Heart left ventricle (tissue), 16 donors: ENCODE measurements at regions of chr16 and their contacts with region 1.

Region 1: GRCh38 chr16:80948886-80949493 is 57.7 kb downstream of the CMC2 start:
- DNase-seq: peak in 4 of 5 donors; percentile 32 to 73 (median 46)
- ATAC-seq: peak in 3 of 4 donors; percentile 39 to 72 (median 63)
- H3K4me3 ChIP-seq: no peak overlapping the region
- H3K27ac ChIP-seq: no peak overlapping the region
- H3K4me1 ChIP-seq: peaks cover 0 to 4% (median 0%) of the 10 kb centered on the region in 12 donors
- H3K27me3 ChIP-seq: no peaks in the 10 kb centered on the region
- CTCF ChIP-seq: peak in 11 of 12 donors; percentile 20 to 72 (median 56)
- POLR2A ChIP-seq: no peak

Region 2: DNA sequence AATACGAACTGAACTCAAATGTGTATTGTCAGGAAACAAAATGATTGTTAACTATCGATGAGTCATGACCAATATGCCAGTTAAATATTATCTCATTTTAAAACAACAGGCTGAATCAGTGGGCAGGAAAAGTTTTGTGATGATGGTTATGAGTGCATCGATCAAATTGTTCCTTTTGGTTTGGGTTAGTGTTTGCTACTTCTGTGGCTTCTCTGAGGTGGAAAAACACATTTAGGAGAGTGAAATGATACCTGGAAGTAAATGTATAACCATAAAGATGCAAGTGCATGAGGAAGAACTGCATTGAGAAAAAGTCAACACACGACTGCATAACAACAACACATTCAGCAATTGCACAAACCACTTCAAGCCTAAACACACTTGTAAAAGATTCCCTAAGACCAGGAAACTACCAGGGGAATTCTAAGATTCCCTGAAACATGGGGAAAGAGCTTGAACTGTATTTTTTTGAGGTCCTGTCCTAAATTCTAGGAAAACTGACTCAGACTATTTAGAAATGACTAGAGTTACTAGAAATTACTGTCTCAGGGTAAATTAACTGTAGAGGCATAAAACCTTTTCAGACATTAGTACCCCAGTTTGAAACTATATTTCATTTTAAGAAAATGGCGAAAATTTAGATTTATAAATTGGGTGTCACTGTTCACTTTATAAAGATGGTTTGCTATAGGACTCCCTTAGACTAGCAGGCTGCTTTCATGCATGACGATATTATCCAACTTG is 189.4 kb before region 1 on chr16:
- intact Hi-C with region 1: no loop called
- DNase-seq: no peak
- ATAC-seq: no peak
- H3K4me3 ChIP-seq: no peak overlapping the region
- H3K27ac ChIP-seq: no peak overlapping the region
- H3K4me1 ChIP-seq: peaks cover 0 to 4% (median 0%) of the 10 kb centered on the region in 12 donors
- H3K27me3 ChIP-seq: no peaks in the 10 kb centered on the region
- CTCF ChIP-seq: no peak
- POLR2A ChIP-seq: no peak

Region 3: GRCh38 chr16:80924372-80924978 is 24.5 kb before region 1 on chr16:
- intact Hi-C with region 1: loop called in 1 of 10 experiments (anchors 2 kb)
- DNase-seq: peak in 3 of 5 donors; percentile 30 to 68 (median 34)
- ATAC-seq: peak in 3 of 4 donors; percentile 53 to 65 (median 53)
- H3K4me3 ChIP-seq: no peak overlapping the region
- H3K27ac ChIP-seq: no peak overlapping the region
- H3K4me1 ChIP-seq: no peaks in the 10 kb centered on the region
- H3K27me3 ChIP-seq: no peaks in the 10 kb centered on the region
- CTCF ChIP-seq: peak in 11 of 12 donors; percentile 26 to 57 (median 47)
- POLR2A ChIP-seq: no peak

Region 4: DNA sequence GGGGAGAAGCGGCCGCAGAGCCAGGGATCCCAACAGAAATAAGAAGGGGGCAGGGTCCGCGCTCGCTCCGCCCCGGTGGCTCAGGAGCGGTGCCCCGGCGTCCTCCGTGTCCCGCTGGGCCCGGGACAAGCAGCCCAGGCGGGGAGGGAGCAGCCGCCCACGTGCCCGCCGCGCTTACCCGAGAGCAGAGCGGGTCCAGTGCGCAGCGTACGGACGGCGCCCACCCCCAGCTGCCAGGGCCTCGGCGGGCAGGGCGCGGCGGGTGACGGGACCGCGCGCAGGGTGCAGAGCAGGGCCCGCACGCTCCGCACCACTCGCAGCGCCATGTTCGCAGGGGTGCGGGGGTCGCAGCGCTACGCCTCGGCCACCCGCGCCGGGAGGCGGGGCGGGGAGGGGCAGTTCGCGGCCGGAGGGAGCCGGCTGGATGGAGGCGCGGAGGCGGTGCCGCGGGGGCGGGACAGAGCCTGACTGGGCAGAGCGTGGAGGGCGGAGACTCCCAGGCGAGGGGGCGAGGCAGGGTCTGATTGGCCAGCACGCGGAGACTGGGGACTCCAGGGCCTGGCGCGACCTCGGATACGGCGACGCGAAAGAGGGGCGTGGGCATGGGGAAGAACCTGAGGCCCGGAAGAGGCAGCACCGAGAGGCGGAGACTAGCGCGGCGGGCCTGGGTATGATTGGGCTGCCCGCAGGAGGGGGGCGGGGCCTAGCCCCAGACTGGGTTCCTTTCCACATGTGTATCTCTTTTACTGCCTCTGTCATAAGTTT is 147.1 kb after region 1 on chr16 and contains the start of gene GCSH:
- intact Hi-C with region 1: no loop called
- DNase-seq: peak; percentile 100
- ATAC-seq: peak; percentile 99 to 100 (median 100)
- H3K4me3 ChIP-seq: peak within 1 kb of the TSS; percentile 50 to 97 (median 78)
- H3K27ac ChIP-seq: peak within 1 kb of the TSS; percentile 40 to 86 (median 71)
- H3K4me1 ChIP-seq: peaks cover 0 to 14% (median 2%) of the 10 kb centered on the region in 12 donors
- H3K27me3 ChIP-seq: no peaks in the 10 kb centered on the region
- CTCF ChIP-seq: no peak
- POLR2A ChIP-seq: peak in 1 of 2 donors; percentile 48
- total RNA-seq, gene GCSH: 22.3 to 51.2 (median 40.1) TPM